Activated naive CD4-positive, alpha-beta T cell treated with anti-CD3 and anti-CD28 coated beads for 36 hours (primary cell): ENCODE measurements at regions of chr2 and their contacts with region 1.

Region 1: GRCh38 chr2:163345908-163346573 is 389.8 kb downstream of the FIGN start:
- DNase-seq: no peak
- H3K4me3 Mint-ChIP-seq: no peak overlapping the region
- H3K27ac Mint-ChIP-seq: no peak overlapping the region
- H3K4me1 Mint-ChIP-seq: no peaks in the 10 kb centered on the region
- H3K27me3 Mint-ChIP-seq: peaks cover 3% of the 10 kb centered on the region

Region 2: DNA sequence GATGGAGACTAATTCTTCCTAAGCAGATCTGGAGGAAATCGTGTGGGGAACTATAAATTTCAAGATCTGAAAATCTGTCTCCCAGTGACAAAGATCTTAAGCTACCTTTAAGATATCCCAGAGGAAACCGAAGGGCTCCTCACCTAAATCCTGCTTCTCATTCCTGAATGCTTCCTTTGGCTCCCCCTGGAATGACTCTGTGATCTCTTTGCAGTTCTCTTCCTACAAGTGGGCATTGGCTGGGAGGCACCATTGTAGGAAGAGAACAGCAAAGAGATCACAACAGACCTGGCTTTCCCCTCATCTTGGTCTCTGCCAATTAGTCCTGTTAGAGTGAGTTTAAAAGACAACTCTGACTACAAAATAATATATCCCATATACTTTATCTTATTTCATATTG is 437.5 kb before region 1 on chr2:
- CTCF ChIA-PET with region 1: no interaction called
- intact Hi-C with region 1: no loop called
- DNase-seq: no peak
- H3K4me3 Mint-ChIP-seq: no peak overlapping the region
- H3K27ac Mint-ChIP-seq: no peak overlapping the region
- H3K4me1 Mint-ChIP-seq: no peaks in the 10 kb centered on the region
- H3K27me3 Mint-ChIP-seq: no peaks in the 10 kb centered on the region

Region 3: DNA sequence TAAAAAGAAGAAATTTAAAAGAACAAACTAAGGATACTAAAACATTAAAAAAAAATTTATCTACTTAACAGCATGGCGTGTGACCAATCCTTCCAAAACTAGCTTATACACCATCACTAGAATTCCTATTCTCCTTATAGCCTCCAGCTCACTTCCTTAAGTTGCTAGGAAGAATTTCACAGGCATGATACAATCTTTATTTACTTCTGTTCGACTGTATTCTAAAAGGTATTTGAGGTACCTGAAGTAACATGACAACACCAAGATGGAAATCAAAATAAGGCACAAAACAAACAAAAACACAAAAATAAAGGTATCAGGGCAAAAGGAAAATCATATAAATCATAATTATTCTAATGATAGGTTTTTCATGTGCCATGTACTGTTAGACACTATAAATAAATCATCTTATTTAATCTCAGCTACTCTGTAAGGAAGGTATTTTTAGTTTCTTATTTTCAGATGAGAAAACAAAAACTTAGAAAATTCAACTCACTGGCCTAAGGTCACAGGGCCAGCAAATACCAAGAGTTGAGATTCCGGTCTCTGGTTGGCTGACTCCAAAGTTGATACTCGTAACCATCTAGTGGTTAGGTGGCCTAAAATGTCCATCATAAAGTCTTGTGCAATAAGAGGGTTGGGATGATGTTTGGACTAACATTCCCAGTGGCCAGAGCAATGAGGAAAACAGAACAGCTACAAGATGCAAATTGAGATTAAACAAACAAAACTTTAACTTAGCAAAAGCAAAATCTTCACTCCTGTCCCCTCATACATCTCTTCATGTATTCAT is 29.2 kb after region 1 on chr2:
- CTCF ChIA-PET with region 1: no interaction called
- intact Hi-C with region 1: no loop called
- DNase-seq: no peak
- H3K4me3 Mint-ChIP-seq: no peak overlapping the region
- H3K27ac Mint-ChIP-seq: no peak overlapping the region
- H3K4me1 Mint-ChIP-seq: no peaks in the 10 kb centered on the region
- H3K27me3 Mint-ChIP-seq: no peaks in the 10 kb centered on the region

Region 4: DNA sequence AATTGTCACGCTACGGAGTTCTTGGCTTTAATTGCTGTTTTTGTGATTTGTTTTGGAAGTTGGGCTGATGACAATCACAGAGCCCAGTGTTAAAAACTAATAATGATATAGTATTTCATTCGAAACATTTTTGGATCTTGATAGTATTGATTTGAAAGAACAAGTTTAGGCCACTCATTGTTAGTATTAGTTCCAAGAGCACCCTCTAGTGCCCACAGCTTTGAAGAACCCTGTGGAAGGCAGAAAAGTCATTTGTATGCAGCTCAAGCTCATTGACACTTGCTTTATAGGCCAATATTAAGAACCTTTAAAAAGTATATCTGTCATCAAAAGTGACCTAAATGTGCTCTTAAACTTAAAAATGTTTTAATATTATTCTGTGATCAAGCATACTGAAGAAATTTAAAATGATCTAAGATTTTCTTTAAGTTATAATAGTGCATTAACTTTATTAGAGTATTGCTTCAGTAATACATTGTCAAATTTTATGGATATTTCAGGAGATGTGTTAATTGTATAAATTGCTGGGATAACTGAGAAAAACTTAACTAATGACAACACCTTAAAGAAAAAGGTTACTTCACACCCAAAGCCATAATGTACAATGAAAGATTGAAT is 1084.2 kb after region 1 on chr2:
- CTCF ChIA-PET with region 1: no interaction called
- intact Hi-C with region 1: loop called (anchors 2 kb)
- DNase-seq: peak; percentile 14
- H3K4me3 Mint-ChIP-seq: no peak overlapping the region
- H3K27ac Mint-ChIP-seq: no peak overlapping the region
- H3K4me1 Mint-ChIP-seq: no peaks in the 10 kb centered on the region
- H3K27me3 Mint-ChIP-seq: no peaks in the 10 kb centered on the region

Region 5: GRCh38 chr2:164717000-164717803 is 1371.2 kb after region 1 on chr2:
- CTCF ChIA-PET with region 1: no interaction called
- intact Hi-C with region 1: loop called (anchors 5 kb)
- DNase-seq: no peak
- H3K4me3 Mint-ChIP-seq: no peak overlapping the region
- H3K27ac Mint-ChIP-seq: no peak overlapping the region
- H3K4me1 Mint-ChIP-seq: no peaks in the 10 kb centered on the region
- H3K27me3 Mint-ChIP-seq: no peaks in the 10 kb centered on the region